ENCODE measurements at regions of chr20 and their contacts with region 1.

Region 1: GRCh38 chr20:13274275-13274861 is 53.3 kb downstream of the ISM1 start:
- DNase-seq: peak in 1 of 2 donors; percentile 40
- ATAC-seq: peak in 5 of 8 donors; percentile 38 to 84 (median 52)
- H3K4me3 ChIP-seq: peak overlapping the region in 1 of 10 donors; percentile 22
- H3K27ac ChIP-seq: peak overlapping the region in 5 of 10 donors; percentile 4 to 58 (median 51)
- H3K4me1 ChIP-seq: peaks cover 0 to 47% (median 18%) of the 10 kb centered on the region in 9 donors
- H3K27me3 ChIP-seq: peaks cover 0 to 5% (median 0%) of the 10 kb centered on the region in 7 donors
- CTCF ChIP-seq: no peak

Region 2: GRCh38 chr20:13221673-13222318 is 52.6 kb before region 1 on chr20:
- intact Hi-C with region 1: loop called in 1 of 10 experiments (anchors 2 kb)
- DNase-seq: peak in 1 of 2 donors; percentile 39
- ATAC-seq: peak; percentile 36 to 86 (median 64)
- H3K4me3 ChIP-seq: peak overlapping the region; percentile 30 to 68 (median 53)
- H3K27ac ChIP-seq: peak overlapping the region in 7 of 10 donors; percentile 35 to 73 (median 50)
- H3K4me1 ChIP-seq: peaks cover 5 to 31% (median 17%) of the 10 kb centered on the region in 9 donors
- H3K27me3 ChIP-seq: peaks cover 3 to 72% (median 44%) of the 10 kb centered on the region in 7 donors
- CTCF ChIP-seq: no peak

Region 3: DNA sequence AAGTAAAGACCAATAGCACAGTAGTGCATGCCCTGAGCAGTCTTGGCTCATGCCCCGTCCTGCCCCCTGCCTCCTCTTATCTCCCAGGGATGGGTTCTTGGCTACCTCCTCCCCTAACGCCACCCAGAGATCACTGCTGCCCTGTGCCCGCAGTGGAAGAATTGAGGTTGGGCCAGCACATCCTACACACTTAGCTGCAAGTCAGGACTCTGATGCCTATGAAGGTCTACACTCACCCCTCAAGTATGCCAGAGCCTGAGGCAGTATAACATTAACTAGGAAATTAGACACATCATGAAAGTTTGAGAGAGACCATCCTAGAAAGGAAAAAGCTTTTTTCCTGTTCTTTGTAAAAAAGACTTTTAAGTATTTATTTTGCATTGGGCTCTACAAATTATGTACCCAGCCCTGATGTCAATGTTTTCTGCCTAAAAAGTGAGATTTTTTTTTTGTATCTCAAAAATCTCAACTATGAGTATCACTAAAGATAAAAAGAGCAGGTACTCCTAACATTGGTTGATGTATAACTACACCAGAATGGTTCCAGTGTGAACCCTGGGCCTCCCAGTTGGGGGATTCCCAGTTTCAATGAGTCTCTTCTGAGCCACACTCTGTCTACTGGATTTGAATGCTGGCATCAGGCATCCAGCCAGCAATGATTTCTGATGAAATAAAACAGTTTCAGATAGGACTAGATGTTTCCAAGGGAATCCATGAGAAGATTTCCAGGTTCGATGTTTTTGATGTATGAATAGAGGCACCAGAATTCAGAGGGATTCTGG is 62.1 kb after region 1 on chr20:
- intact Hi-C with region 1: loop called in 1 of 10 experiments (anchors 10 kb)
- DNase-seq: no peak
- ATAC-seq: no peak
- H3K4me3 ChIP-seq: no peak overlapping the region
- H3K27ac ChIP-seq: no peak overlapping the region
- H3K4me1 ChIP-seq: no peaks in the 10 kb centered on the region
- H3K27me3 ChIP-seq: no peaks in the 10 kb centered on the region
- CTCF ChIP-seq: no peak